ENCODE measurements at regions of chr12 and their contacts with region 1.

Region 1: DNA sequence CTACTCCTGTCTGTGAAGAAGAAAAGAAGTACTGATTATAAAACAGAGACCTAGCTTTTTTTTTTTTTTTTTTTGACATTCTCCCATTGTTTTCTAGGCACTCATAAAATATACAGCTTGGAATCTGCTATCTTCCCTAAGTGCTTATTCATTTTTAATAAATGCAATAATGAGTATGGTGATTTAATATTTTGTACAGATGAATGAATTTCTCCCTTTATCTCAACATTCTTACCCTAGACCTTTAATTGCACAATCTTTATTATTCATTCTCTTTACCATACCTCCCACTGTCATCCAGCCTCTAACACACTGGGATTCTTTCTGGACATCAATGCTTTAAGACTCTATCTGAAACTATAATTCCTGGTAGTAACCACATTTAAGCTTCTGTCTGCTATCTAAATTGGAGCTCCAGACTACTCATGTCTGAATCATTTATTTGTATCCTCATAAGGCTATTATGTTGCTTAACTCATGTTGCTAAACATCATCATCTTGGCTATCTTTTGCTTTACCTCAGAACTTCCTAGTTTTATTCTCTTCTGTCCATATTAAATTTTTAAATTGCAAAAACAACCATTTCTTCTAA is 270.2 kb downstream of the ALG10B start:
- DNase-seq: no peak
- ATAC-seq: no peak
- H3K4me3 ChIP-seq: no peak overlapping the region
- H3K27ac ChIP-seq: no peak overlapping the region
- H3K4me1 ChIP-seq: peaks cover 0 to 13% (median 0%) of the 10 kb centered on the region in 12 donors
- H3K27me3 ChIP-seq: no peaks in the 10 kb centered on the region
- CTCF ChIP-seq: no peak
- POLR2A ChIP-seq: no peak

Region 2: DNA sequence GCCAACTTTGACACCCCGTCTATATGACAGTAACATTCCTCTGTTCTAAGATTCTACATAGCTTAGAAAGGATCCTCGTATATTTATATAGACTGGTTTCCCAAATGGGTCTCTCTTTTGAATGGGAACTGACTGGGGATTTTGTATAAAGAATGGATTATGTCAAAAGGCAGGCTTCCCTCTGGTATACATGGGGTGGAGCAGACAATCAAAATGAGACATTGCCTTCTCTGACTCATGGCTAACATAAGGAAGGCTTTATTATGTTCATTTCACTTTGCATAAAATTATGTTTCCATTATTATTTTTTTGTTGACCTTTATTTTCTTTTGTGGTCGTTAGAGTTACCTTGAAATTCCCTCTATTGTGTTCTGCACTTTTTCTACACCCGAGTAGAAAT is 59.1 kb before region 1 on chr12:
- intact Hi-C with region 1: loop called in 1 of 10 experiments (anchors 10 kb)
- DNase-seq: no peak
- ATAC-seq: no peak
- H3K4me3 ChIP-seq: no peak overlapping the region
- H3K27ac ChIP-seq: no peak overlapping the region
- H3K4me1 ChIP-seq: no peaks in the 10 kb centered on the region
- H3K27me3 ChIP-seq: no peaks in the 10 kb centered on the region
- CTCF ChIP-seq: no peak
- POLR2A ChIP-seq: no peak

Region 3: GRCh38 chr12:38555620-38556596 is 30.8 kb before region 1 on chr12:
- intact Hi-C with region 1: loop called in 1 of 10 experiments (anchors 5 kb)
- DNase-seq: no peak
- ATAC-seq: no peak
- H3K4me3 ChIP-seq: no peak overlapping the region
- H3K27ac ChIP-seq: no peak overlapping the region
- H3K4me1 ChIP-seq: no peaks in the 10 kb centered on the region
- H3K27me3 ChIP-seq: no peaks in the 10 kb centered on the region
- CTCF ChIP-seq: no peak
- POLR2A ChIP-seq: no peak